IMR-90 (cell line): ENCODE measurements at regions of chr9 and their contacts with region 1.

Region 1: DNA sequence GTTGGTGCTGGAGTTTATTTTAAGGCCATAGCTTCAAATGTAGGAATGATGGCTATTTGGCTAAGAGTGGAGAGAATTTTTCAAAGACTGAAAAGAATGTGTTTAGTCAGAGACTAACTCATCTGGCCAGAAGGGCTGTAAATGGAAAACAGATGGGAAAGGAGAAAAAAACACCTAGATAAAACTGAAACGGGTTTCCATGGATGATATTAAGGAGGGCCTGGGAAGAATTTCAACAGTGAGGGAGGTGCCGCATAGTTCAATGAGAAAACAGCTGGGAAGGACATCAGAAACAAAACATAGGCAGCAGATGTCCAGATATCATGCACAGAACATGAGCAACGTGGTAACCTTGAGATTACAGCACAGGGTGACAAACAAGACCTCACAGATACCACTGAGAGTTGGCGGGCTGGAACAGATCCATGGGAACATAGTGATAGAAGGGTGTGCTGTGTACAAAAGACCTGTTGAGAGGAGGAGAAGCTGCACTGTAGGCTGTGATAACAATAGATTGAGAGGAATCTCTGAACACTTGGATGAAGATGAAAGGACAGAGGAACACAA is 31.2 kb upstream of the RAD23B start:
- DNase-seq: peak; percentile 95
- ATAC-seq: peak; percentile 73
- H3K4me3 ChIP-seq: no peak overlapping the region
- H3K27ac ChIP-seq: peak overlapping the region; percentile 57; the same call in 1 of the 2 replicates
- H3K4me1 ChIP-seq: peaks cover 20% of the 10 kb centered on the region
- H3K27me3 ChIP-seq: no peaks in the 10 kb centered on the region
- CTCF ChIP-seq: no peak
- POLR2A ChIP-seq: no peak
- RAD21 ChIP-seq: no peak

Region 2: DNA sequence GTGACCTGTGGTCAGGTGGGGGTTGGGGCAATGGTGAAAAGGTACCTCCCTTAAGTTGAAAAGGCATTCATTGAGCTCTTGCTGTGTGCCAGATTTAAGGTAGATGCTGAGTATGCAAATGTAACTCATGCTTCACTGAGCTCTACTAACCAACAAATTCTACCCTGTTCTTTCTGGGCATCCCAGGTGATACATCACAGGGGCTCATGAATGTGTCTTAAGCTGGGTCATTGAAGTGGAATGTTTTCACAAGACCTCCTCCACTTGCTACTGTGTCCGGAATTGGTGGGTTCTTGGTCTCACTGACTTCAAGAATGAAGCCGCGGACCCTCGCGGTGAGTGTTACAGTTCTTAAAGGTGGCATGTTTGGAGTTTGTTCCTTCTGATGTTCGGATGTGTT is 751.7 kb before region 1 on chr9:
- CTCF ChIA-PET with region 1: no interaction called
- POLR2A ChIA-PET with region 1: no interaction called
- dilution Hi-C with region 1: no loop called
- in situ Hi-C with region 1: no loop called
- intact Hi-C with region 1: no loop called
- DNase-seq: no peak
- ATAC-seq: no peak
- H3K4me3 ChIP-seq: no peak overlapping the region
- H3K27ac ChIP-seq: no peak overlapping the region
- H3K4me1 ChIP-seq: no peaks in the 10 kb centered on the region
- H3K27me3 ChIP-seq: no peaks in the 10 kb centered on the region
- CTCF ChIP-seq: no peak
- POLR2A ChIP-seq: no peak
- RAD21 ChIP-seq: no peak

Region 3: DNA sequence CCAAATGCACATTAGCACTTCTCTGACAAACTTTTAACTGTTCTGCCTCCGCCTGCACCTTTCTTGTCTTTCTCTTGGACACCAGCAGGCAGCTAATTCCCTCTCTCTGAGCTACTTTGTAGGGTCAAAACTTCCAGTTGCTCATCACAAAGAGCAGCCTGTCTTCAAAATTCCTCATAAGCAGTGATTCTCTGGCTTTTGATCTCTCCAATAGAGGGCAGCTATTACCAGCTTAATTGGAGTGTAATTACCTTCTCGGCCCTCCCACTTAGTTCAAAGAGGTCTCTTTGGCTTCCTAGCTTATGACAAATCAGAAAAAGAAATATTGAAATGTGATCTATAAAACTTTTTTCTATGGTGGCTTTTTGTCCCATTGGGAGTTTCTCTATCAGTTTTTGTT is 12.4 kb before region 1 on chr9:
- CTCF ChIA-PET with region 1: interaction called, 4 read pairs
- POLR2A ChIA-PET with region 1: no interaction called
- dilution Hi-C with region 1: no loop called
- in situ Hi-C with region 1: no loop called
- intact Hi-C with region 1: loop called (anchors 1 kb)
- DNase-seq: peak; percentile 48
- ATAC-seq: peak; percentile 48
- H3K4me3 ChIP-seq: no peak overlapping the region
- H3K27ac ChIP-seq: no peak overlapping the region
- H3K4me1 ChIP-seq: peaks cover 6% of the 10 kb centered on the region
- H3K27me3 ChIP-seq: peaks cover 1% of the 10 kb centered on the region; the same call in 1 of the 2 replicates
- CTCF ChIP-seq: peak; percentile 49; the same call in 1 of the 2 replicates
- POLR2A ChIP-seq: no peak
- RAD21 ChIP-seq: peak; percentile 47

Region 4: GRCh38 chr9:107274953-107275422 is 23.1 kb after region 1 on chr9:
- CTCF ChIA-PET with region 1: interaction called, 3 read pairs
- POLR2A ChIA-PET with region 1: no interaction called
- dilution Hi-C with region 1: no loop called
- in situ Hi-C with region 1: no loop called
- intact Hi-C with region 1: loop called (anchors 2 kb)
- DNase-seq: peak; percentile 99
- ATAC-seq: peak; percentile 81
- H3K4me3 ChIP-seq: no peak overlapping the region
- H3K27ac ChIP-seq: peak overlapping the region; percentile 94
- H3K4me1 ChIP-seq: peaks cover 30% of the 10 kb centered on the region
- H3K27me3 ChIP-seq: no peaks in the 10 kb centered on the region
- CTCF ChIP-seq: no peak
- POLR2A ChIP-seq: no peak
- RAD21 ChIP-seq: no peak

Region 5: GRCh38 chr9:107294756-107295155 is 42.9 kb after region 1 on chr9:
- CTCF ChIA-PET with region 1: no interaction called
- POLR2A ChIA-PET with region 1: no interaction called
- dilution Hi-C with region 1: no loop called
- in situ Hi-C with region 1: no loop called
- intact Hi-C with region 1: no loop called
- DNase-seq: no peak
- ATAC-seq: no peak
- H3K4me3 ChIP-seq: no peak overlapping the region
- H3K27ac ChIP-seq: no peak overlapping the region
- H3K4me1 ChIP-seq: peaks cover 12% of the 10 kb centered on the region
- H3K27me3 ChIP-seq: no peaks in the 10 kb centered on the region
- CTCF ChIP-seq: no peak
- POLR2A ChIP-seq: no peak
- RAD21 ChIP-seq: no peak